ENCODE measurements at regions of chr11 and their contacts with region 1.

Region 1: DNA sequence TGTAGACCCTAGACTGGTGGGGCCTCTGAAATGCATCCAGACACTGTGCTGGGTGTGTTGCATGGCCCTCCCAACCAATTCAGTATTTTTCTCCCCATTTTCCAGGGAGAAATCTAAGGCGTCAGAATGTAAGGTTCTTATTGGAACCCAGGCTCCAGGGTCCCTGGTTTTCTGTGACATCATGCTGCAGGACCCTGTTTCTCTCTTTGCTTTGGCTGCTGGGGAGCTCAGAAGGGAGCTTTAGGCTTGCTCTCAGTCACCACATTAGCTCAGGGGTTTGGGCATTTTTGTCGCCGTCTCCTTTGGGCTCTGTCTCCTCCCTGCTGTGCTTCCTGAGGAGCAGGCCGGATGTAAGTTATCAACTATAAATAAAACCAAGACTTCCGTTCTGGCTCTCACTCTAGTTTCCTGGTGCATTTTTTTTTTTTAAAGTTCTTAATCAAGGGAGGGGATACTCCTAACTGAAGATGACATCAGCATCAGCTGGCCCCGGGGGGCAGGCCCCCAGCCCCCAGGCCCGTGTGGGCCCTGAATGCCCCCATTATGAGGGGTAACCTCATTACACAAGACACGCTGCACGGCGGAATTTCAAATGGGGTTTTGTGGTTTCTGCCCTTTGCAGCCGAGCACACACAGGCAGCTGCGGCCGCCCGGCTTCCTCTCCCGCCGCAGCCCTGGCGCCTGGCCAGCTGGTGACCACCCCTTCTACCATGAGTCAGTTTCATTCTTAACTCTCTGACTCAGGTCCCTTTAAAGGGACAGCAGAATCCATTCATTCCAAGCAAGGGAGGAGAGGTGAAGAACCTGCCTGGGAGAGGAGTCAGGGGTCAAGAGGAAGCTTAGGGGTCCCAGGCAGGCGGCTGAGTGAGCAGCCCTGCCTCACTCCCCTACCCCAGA is 3.2 kb downstream of the MYEOV start:
- DNase-seq: peak; percentile 97
- ATAC-seq: peak; percentile 55
- H3K4me3 Mint-ChIP-seq: peak overlapping the region; percentile 35
- H3K27ac Mint-ChIP-seq: peak overlapping the region; percentile 82
- H3K4me1 Mint-ChIP-seq: peaks cover 64% of the 10 kb centered on the region
- H3K27me3 Mint-ChIP-seq: no peaks in the 10 kb centered on the region
- CTCF ChIP-seq: no peak

Region 2: DNA sequence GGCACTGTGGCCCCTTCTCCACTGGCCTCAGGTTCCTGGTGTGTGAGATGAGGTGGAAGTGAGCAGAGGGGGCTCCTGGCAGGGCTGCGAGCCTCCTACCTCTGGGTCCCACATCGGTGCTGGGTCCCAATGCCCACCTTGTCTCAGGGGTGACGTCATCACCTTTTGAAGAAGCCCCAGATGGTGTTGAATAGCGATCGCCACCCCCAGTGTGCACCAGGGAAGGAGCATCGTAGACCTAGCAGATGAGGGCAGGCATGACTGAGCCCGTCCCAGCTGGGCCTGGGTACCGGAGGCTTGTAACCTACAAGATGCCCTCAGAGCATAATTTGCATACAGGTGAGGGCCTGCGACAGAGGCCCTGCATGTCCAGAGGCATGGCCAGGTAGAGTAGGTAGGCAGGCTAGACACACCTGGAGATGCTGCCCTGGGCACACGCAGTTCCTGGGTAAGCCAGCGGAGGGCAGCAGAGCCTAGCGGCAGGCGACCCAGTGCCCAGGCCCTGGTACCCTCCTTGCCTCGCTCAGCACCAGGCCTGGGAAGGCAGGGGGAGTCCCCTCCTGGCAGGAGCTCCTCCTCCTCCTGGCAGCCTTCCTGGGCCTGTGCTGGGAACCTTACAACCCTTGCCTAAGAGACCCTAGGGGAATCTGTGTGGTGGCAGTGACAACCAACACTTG is 195.9 kb before region 1 on chr11:
- CTCF ChIA-PET with region 1: interaction called, 3 read pairs
- POLR2A ChIA-PET with region 1: no interaction called
- intact Hi-C with region 1: loop called (anchors 10 kb)
- DNase-seq: peak; percentile 78
- ATAC-seq: peak; percentile 99
- H3K4me3 Mint-ChIP-seq: no peak overlapping the region
- H3K27ac Mint-ChIP-seq: no peak overlapping the region
- H3K4me1 Mint-ChIP-seq: peaks cover 2% of the 10 kb centered on the region
- H3K27me3 Mint-ChIP-seq: no peaks in the 10 kb centered on the region
- CTCF ChIP-seq: peak; percentile 99

Region 3: GRCh38 chr11:69122642-69123431 is 174.3 kb before region 1 on chr11:
- CTCF ChIA-PET with region 1: interaction called, 3 read pairs
- POLR2A ChIA-PET with region 1: no interaction called
- intact Hi-C with region 1: loop called (anchors 5 kb)
- DNase-seq: peak; percentile 95
- ATAC-seq: peak; percentile 93
- H3K4me3 Mint-ChIP-seq: peak overlapping the region; percentile 14
- H3K27ac Mint-ChIP-seq: peak overlapping the region; percentile 86
- H3K4me1 Mint-ChIP-seq: peaks cover 38% of the 10 kb centered on the region
- H3K27me3 Mint-ChIP-seq: no peaks in the 10 kb centered on the region
- CTCF ChIP-seq: no peak

Region 4: DNA sequence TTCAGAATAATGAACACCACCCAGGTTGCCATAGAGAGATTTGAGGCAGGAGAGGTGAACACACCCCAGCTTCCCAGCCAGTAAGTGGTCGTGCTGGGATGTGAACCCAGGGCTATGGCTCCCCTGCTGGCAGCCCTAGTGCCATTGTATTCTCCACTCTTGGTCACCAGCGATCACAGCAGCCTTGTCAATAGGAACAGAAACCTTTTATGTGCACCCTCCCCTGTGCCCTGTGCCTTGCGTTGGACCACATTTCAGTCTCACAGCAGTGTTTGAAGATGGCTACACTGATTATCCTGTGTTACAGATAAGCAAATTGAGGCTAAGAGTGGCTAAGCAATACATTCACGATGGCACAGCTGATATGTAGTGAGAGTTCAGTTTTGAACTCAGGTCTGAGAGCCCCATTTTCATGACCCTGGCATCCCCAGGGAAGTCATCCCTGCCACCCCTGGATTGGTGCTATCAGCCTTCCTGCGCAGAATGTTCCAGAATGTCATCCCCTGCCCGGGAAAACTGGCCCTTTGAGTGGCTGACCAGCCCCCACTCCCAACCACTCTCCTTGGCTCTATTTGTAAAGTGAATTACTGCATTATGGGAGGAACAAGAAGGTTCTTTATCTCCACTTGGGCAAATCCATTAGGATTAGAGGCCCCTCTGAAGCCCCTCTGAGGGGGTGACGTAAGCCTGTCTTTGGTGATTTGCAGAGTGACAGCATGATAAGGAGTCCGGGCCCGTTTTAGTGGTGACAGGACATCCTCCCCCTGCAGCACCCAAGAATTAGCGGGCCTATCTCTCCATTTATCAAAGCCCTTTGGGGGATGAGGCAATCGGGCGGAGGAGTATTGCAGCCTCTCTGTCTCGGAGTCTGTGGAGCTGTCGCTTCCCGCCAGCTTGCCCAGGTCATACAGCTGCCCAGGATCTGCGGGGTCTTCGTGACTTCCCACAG is 110.6 kb before region 1 on chr11:
- CTCF ChIA-PET with region 1: no interaction called
- POLR2A ChIA-PET with region 1: no interaction called
- intact Hi-C with region 1: no loop called
- DNase-seq: no peak
- ATAC-seq: no peak
- H3K4me3 Mint-ChIP-seq: no peak overlapping the region
- H3K27ac Mint-ChIP-seq: no peak overlapping the region
- H3K4me1 Mint-ChIP-seq: peaks cover 4% of the 10 kb centered on the region
- H3K27me3 Mint-ChIP-seq: no peaks in the 10 kb centered on the region
- CTCF ChIP-seq: no peak

Region 5: GRCh38 chr11:69311767-69312385 is 14.7 kb after region 1 on chr11:
- CTCF ChIA-PET with region 1: interaction called, 13 read pairs
- POLR2A ChIA-PET with region 1: interaction called, 9 read pairs
- intact Hi-C with region 1: no loop called
- DNase-seq: peak; percentile 50
- ATAC-seq: peak; percentile 43
- H3K4me3 Mint-ChIP-seq: peak overlapping the region; percentile 9
- H3K27ac Mint-ChIP-seq: peak overlapping the region; percentile 79
- H3K4me1 Mint-ChIP-seq: peaks cover 30% of the 10 kb centered on the region
- H3K27me3 Mint-ChIP-seq: no peaks in the 10 kb centered on the region
- CTCF ChIP-seq: no peak

Region 6: DNA sequence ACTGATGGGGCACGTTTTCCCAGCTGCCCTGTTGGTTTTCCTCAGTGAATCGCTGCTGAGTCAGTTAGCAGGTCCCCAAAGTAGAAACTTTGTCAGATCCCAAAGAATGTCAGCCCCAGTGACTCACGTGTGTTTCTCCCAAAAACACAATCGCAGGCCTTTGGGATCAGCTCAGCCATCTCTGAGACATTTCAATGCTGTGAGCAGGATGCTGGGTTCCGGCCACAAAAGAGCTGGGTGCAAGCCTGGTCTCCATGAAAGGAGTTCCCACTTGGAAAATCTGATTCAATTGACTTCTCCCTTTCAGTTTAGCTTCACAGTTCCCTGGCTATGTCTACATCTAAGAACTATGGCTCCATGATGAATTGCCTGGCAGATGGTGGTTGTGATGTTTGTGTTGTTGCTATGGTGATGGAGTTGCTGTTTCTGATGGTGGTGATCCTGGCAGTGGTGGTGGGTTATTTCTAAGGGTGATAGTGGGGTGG is 24.8 kb after region 1 on chr11:
- CTCF ChIA-PET with region 1: no interaction called
- POLR2A ChIA-PET with region 1: no interaction called
- intact Hi-C with region 1: no loop called
- DNase-seq: no peak
- ATAC-seq: no peak
- H3K4me3 Mint-ChIP-seq: no peak overlapping the region
- H3K27ac Mint-ChIP-seq: no peak overlapping the region
- H3K4me1 Mint-ChIP-seq: peaks cover 11% of the 10 kb centered on the region
- H3K27me3 Mint-ChIP-seq: no peaks in the 10 kb centered on the region
- CTCF ChIP-seq: no peak

Region 7: GRCh38 chr11:69337211-69337721 is 40.1 kb after region 1 on chr11:
- CTCF ChIA-PET with region 1: interaction called, 3 read pairs
- POLR2A ChIA-PET with region 1: interaction called, 3 read pairs
- intact Hi-C with region 1: loop called (anchors 1 kb)
- DNase-seq: peak; percentile 78
- ATAC-seq: peak; percentile 91
- H3K4me3 Mint-ChIP-seq: peak overlapping the region; percentile 34
- H3K27ac Mint-ChIP-seq: peak overlapping the region; percentile 94
- H3K4me1 Mint-ChIP-seq: peaks cover 38% of the 10 kb centered on the region
- H3K27me3 Mint-ChIP-seq: no peaks in the 10 kb centered on the region
- CTCF ChIP-seq: no peak

Region 8: DNA sequence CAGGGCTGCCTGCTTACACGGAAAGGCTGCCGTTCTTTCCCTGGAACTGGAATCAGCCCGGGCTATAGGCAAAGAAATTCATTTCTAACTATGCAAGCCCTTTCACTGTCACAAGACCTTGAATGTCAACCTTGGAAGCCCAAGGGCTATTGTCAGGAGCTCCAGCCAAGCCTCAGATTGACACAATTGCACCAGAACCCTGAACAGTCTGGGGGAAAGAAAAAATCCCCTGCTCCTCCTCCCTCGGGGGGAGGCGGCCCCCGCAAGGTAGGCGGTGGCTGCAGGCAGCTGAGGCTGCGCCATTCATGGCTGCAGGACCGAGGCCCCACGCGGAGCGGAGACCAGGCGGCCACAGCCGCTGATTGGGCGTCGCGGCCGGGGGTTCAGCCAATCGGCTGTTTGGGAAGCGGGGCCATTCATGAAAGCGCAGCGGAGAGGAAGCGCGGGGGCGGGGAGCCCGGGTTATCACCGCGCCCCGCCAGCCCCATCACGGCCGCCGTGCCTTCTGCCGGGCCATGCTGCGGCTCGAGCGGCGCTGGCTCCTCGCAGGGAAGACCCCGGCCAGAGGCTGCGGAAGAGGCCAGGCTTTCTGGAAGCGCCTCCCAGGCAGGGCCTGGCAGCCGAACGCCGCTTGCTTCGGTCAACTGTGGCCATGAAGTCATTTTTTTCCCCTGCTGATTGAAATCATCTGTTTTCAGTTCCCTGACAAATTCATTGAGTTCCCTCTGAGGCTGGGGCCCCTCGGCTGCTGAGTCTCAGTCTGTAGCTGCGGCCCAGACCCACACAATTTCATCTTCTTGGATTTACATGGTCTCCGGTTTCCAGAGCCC is 146.2 kb after region 1 on chr11:
- CTCF ChIA-PET with region 1: no interaction called
- POLR2A ChIA-PET with region 1: interaction called, 3 read pairs
- intact Hi-C with region 1: loop called (anchors 10 kb)
- DNase-seq: peak; percentile 91
- ATAC-seq: peak; percentile 96
- H3K4me3 Mint-ChIP-seq: peak overlapping the region; percentile 31
- H3K27ac Mint-ChIP-seq: peak overlapping the region; percentile 15
- H3K4me1 Mint-ChIP-seq: peaks cover 16% of the 10 kb centered on the region
- H3K27me3 Mint-ChIP-seq: peaks cover 8% of the 10 kb centered on the region
- CTCF ChIP-seq: no peak

Region 9: GRCh38 chr11:69471329-69472052 is 174.4 kb after region 1 on chr11:
- CTCF ChIA-PET with region 1: no interaction called
- POLR2A ChIA-PET with region 1: no interaction called
- intact Hi-C with region 1: no loop called
- DNase-seq: no peak
- ATAC-seq: no peak
- H3K4me3 Mint-ChIP-seq: no peak overlapping the region
- H3K27ac Mint-ChIP-seq: no peak overlapping the region
- H3K4me1 Mint-ChIP-seq: no peaks in the 10 kb centered on the region
- H3K27me3 Mint-ChIP-seq: no peaks in the 10 kb centered on the region
- CTCF ChIP-seq: no peak

Region 10: GRCh38 chr11:69510471-69511357 is 213.6 kb after region 1 on chr11:
- CTCF ChIA-PET with region 1: no interaction called
- POLR2A ChIA-PET with region 1: no interaction called
- intact Hi-C with region 1: no loop called
- DNase-seq: no peak
- ATAC-seq: no peak
- H3K4me3 Mint-ChIP-seq: no peak overlapping the region
- H3K27ac Mint-ChIP-seq: no peak overlapping the region
- H3K4me1 Mint-ChIP-seq: peaks cover 6% of the 10 kb centered on the region
- H3K27me3 Mint-ChIP-seq: peaks cover 5% of the 10 kb centered on the region
- CTCF ChIP-seq: no peak

Region 11: DNA sequence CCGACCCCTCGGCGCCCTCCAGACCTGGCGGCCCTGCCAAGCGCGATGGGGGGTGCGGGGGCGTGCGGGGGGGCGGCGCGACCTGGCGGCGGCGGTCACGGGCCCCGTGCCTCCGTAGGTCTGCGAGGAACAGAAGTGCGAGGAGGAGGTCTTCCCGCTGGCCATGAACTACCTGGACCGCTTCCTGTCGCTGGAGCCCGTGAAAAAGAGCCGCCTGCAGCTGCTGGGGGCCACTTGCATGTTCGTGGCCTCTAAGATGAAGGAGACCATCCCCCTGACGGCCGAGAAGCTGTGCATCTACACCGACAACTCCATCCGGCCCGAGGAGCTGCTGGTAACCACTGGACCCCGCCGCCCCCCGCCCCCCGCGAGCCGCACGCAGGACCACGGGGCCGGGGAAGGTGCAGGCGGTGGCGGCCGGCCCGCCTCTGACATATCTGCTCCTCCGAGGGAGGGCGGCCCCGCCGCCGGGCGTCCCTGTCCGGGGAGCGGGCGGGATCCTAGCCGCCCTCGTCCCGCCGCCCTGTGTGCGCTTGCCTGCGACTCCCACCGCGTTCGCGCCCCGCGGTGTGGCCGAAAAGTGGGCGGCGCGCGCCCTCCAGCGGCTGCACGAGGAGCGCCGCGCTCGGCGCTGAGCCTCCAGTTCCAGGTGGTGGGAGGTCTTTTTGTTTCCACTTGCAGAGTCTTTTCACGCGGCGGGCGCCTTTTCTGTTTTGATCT is 345.9 kb after region 1 on chr11:
- CTCF ChIA-PET with region 1: interaction called, 12 read pairs
- POLR2A ChIA-PET with region 1: interaction called, 3 read pairs
- intact Hi-C with region 1: loop called (anchors 10 kb)
- DNase-seq: peak; percentile 77
- ATAC-seq: peak; percentile 82
- H3K4me3 Mint-ChIP-seq: peak overlapping the region; percentile 66
- H3K27ac Mint-ChIP-seq: peak overlapping the region; percentile 63
- H3K4me1 Mint-ChIP-seq: peaks cover 19% of the 10 kb centered on the region
- H3K27me3 Mint-ChIP-seq: peaks cover 24% of the 10 kb centered on the region
- CTCF ChIP-seq: peak; percentile 98

Measured in activated CD8-positive, alpha-beta T cell treated with anti-CD3 and anti-CD28 coated beads for 36 hours (primary cell).